Activated naive CD4-positive, alpha-beta T cell treated with anti-CD3 and anti-CD28 coated beads, Interleukin-2, amount 10 ng/mL, durations not matched to agents 7 days and 5 days (primary cell): ENCODE measurements at regions of chr19 and their contacts with region 1.

Region 1: GRCh38 chr19:33416307-33417215 is 43.1 kb downstream of the CEBPG start:
- DNase-seq: peak; percentile 82
- H3K4me3 Mint-ChIP-seq: no peak overlapping the region
- H3K27ac Mint-ChIP-seq: no peak overlapping the region
- H3K4me1 Mint-ChIP-seq: peaks cover 5% of the 10 kb centered on the region
- H3K27me3 Mint-ChIP-seq: no peaks in the 10 kb centered on the region

Region 2: DNA sequence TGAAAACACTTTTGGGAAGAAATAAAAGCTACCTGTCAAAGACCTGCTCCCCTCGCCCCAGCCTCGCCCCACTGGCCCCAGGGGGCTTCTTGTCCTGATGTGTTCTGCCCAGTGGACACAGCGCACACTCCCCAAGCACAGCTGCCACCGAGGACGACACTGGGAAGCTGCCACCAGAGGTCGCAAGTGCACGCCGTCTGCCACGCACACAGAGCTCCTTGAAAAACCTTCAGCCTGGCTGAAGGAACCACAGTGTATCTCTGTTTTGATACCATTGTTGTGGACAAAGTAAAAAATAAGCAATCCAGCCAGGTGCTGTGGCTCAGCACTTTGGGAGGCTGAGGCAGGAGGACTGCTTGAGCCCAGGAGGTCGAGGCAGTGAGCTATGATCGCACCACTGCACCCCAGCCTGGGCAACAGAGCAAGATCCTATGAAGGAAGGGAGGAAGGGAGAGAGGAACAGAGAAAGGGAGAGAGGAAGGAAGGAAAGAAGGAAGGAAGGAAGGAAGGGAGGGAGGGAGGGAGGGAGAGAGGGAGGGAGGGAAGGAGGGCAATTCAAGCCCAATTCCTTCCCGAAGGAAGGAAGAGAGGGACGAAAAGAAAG is 14.2 kb after region 1 on chr19:
- CTCF ChIA-PET with region 1: interaction called, 14 read pairs
- DNase-seq: peak; percentile 78
- H3K4me3 Mint-ChIP-seq: no peak overlapping the region
- H3K27ac Mint-ChIP-seq: peak overlapping the region; percentile 33
- H3K4me1 Mint-ChIP-seq: peaks cover 7% of the 10 kb centered on the region
- H3K27me3 Mint-ChIP-seq: peaks cover 7% of the 10 kb centered on the region

Region 3: DNA sequence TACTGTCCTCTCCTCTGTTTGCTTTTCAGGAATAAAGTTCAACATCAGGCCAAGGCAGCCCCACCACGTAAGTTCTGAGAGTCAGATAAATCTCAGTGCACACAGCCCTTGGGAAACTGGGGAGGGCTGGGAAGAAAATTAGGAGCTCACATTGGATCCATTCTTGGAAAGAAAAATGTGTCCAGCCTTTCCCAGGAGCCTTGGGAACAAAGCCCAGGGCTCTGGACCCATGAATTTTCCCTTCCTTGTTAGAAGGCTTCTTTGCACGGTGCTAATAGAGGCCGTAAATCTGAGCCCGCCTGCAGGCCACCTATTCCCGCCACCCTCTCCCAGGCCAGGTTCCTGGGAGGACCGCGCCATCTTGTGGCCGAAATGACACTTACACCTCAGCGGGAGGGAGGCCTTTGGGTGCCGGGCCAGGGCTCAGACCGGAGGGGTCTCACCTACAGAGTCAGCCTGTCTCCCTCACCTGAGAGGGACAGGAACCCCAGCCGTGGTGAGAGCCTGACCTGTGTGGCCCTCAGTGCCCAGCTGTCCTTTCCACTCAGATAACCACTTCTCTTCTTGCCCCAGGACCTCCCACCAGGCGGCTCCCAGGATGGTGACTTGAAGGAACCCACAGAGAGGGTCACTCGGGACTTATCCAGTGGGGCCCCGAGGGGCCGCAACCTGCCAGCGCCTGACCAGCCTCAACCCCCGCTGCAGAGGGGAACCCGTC is 355.0 kb after region 1 on chr19:
- CTCF ChIA-PET with region 1: interaction called, 18 read pairs
- DNase-seq: peak; percentile 79
- H3K4me3 Mint-ChIP-seq: no peak overlapping the region
- H3K27ac Mint-ChIP-seq: no peak overlapping the region
- H3K4me1 Mint-ChIP-seq: no peaks in the 10 kb centered on the region
- H3K27me3 Mint-ChIP-seq: no peaks in the 10 kb centered on the region